Psoas muscle (tissue), 8 donors: ENCODE measurements at regions of chr20 and their contacts with region 1.

Region 1: GRCh38 chr20:3716195-3716834 is 3.9 kb upstream of the SIGLEC1 start:
- DNase-seq: peak in 1 of 2 donors; percentile 55
- ATAC-seq: peak; percentile 34 to 59 (median 49)
- H3K4me3 ChIP-seq: no peak overlapping the region
- H3K27ac ChIP-seq: no peak overlapping the region
- H3K4me1 ChIP-seq: no peaks in the 10 kb centered on the region
- H3K27me3 ChIP-seq: peaks cover 0 to 2% (median 0%) of the 10 kb centered on the region in 3 donors
- CTCF ChIP-seq: peak; percentile 47

Region 2: GRCh38 chr20:2651772-2652723 is 1064.3 kb before region 1 on chr20 and contains the start of gene NOP56:
- intact Hi-C with region 1: no loop called
- DNase-seq: peak; percentile 93 to 96
- ATAC-seq: peak; percentile 96 to 99 (median 98)
- H3K4me3 ChIP-seq: peak within 1 kb of the TSS; percentile 98
- H3K27ac ChIP-seq: peak within 1 kb of the TSS; percentile 95
- H3K4me1 ChIP-seq: peaks cover 18% of the 10 kb centered on the region
- H3K27me3 ChIP-seq: no peaks in the 10 kb centered on the region
- CTCF ChIP-seq: no peak
- total RNA-seq, gene NOP56: 90.9 to 114 (median 102) TPM

Region 3: GRCh38 chr20:3670511-3670910 is 45.8 kb before region 1 on chr20:
- intact Hi-C with region 1: no loop called
- DNase-seq: no peak
- ATAC-seq: peak in 3 of 4 donors; percentile 12 to 40 (median 34)
- H3K4me3 ChIP-seq: no peak overlapping the region
- H3K27ac ChIP-seq: no peak overlapping the region
- H3K4me1 ChIP-seq: no peaks in the 10 kb centered on the region
- H3K27me3 ChIP-seq: peaks cover 0 to 35% (median 4%) of the 10 kb centered on the region in 3 donors
- CTCF ChIP-seq: no peak

Region 4: GRCh38 chr20:3753098-3753980 is 37.0 kb after region 1 on chr20:
- intact Hi-C with region 1: loop called in 1 of 2 experiments (anchors 5 kb)
- DNase-seq: no peak
- ATAC-seq: peak; percentile 62 to 82 (median 70)
- H3K4me3 ChIP-seq: no peak overlapping the region
- H3K27ac ChIP-seq: no peak overlapping the region
- H3K4me1 ChIP-seq: no peaks in the 10 kb centered on the region
- H3K27me3 ChIP-seq: peaks cover 0 to 35% (median 2%) of the 10 kb centered on the region in 3 donors
- CTCF ChIP-seq: peak; percentile 73

Region 5: DNA sequence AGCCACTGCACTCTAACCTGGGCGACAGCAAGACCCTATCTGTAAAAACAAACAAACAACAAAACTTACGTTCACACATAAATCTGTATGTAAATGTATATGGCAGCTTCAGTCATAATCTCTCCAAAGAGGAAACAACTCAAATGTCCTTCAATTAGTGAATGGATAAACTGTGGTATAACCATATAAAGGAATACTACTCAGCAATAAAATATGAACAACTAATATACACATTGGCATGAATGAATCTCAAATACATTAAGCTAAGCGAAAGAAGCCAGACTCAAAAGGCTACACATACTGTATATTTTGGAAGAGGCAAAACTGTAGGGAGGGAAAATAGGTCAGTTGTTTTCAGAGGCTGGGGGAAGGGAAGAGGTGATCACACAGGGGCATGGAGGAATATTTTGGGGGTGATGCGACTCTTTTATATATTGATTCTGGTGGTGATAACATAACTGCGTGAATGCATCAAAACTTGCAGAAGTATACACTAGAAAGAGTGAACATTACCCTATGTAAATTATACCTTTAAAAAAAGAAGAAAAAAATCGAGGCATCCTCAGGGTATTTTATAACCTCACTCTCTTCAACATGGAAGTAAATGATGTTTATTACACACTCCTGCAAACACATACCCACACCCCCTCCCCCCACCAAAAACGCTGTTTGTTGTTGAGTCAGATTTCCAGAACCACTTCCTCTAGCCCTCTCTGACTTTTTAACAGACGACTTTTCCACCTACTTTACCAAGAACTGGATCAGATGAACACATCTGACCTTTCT is 414.3 kb after region 1 on chr20:
- intact Hi-C with region 1: no loop called
- DNase-seq: no peak
- ATAC-seq: peak in 1 of 4 donors; percentile 27
- H3K4me3 ChIP-seq: no peak overlapping the region
- H3K27ac ChIP-seq: no peak overlapping the region
- H3K4me1 ChIP-seq: no peaks in the 10 kb centered on the region
- H3K27me3 ChIP-seq: no peaks in the 10 kb centered on the region
- CTCF ChIP-seq: no peak